ENCODE measurements at regions of chr7 and their contacts with region 1.

Region 1: DNA sequence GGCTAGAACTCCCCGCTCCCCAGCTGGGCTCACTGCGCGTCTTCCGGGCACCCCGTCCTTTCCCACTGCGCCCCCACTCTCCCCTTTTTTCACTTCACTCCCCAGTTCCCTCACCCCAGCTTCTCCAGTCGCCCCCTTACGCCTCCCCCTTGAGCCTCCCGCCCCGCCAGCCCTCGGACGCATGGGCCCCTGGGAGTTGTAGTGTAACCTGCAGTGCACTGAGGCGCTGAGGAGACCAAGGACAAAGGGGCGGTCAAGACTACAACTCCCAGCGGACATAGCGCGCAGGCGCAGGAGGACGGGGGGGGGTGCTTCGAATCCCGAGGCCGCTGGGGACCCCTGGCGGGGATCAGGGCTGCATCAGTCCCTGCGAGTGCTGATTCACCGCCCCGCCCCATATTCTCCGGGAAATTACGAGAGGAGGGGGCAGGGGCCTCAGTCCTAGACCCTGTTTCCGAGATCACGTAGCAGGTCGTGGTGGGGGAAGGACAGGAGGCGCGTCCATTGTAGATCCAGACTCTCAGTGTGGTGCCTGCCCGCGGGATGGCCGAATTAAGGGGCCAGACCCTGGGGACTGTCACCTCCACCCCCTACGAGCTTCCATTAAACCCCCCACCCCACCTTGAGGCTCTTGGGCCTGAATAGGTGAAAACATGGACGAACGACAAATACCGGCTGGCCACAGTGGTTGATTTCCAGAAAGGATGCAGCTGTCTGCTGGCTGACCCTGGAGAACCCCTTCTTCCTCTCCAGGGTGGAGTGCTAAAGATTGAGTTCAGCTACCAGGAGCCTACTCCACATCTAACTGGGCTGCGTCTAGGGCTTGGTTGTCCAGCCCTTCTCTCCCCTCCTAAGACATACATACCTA is 554 bp upstream of the YWHAG start:
- DNase-seq: peak; percentile 92
- H3K4me3 Mint-ChIP-seq: peak overlapping the region; percentile 88
- H3K27ac Mint-ChIP-seq: peak overlapping the region; percentile 96
- H3K4me1 Mint-ChIP-seq: peaks cover 48% of the 10 kb centered on the region
- H3K27me3 Mint-ChIP-seq: no peaks in the 10 kb centered on the region

Region 2: GRCh38 chr7:75531359-75531821 is 828.0 kb before region 1 on chr7:
- intact Hi-C with region 1: loop called (anchors 10 kb)
- DNase-seq: no peak
- H3K4me3 Mint-ChIP-seq: no peak overlapping the region
- H3K27ac Mint-ChIP-seq: no peak overlapping the region
- H3K4me1 Mint-ChIP-seq: peaks cover 20% of the 10 kb centered on the region
- H3K27me3 Mint-ChIP-seq: peaks cover 5% of the 10 kb centered on the region

Region 3: DNA sequence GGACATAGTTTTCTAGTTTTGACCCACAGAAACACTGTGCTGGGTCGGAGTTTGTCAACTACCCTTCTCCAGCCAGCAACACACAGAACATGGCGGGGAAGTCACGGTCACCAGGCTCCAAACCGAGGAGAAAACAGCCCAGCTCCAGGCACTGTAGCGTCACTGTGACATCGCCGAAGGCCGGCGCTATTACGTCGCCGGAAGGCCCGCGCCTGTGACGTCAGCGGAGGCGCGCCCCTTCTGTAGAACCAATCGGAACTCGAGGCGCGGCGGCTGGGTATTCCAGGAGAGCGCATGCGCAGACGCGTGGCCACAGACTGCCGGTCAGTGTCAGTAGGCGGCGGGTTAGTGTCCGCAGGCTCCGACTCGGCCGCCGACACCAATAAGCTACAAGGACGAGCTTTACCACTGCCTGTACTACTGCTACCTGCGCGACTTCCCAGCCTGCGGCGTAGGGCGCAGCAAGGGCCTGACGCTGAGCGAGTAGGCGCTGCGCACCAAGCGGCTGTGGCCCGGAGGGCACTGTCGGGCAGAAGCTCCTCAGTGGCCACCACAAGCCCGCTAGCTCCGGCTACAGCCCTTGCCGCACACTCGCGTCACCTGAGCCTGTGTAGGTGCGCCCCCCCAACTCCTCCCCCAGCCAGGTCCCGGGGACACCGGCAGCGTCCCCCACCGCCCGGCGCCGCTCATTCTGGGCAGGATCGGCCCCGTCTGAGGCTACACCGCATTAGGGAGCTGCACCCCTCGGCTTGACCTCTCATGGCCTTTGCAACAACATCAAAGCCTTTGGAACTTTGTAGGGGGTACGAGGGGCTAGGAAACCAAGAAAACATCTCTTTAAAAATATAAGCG is 192.7 kb before region 1 on chr7:
- intact Hi-C with region 1: loop called (anchors 1 kb)
- DNase-seq: peak; percentile 93
- H3K4me3 Mint-ChIP-seq: peak overlapping the region; percentile 85
- H3K27ac Mint-ChIP-seq: peak overlapping the region; percentile 85
- H3K4me1 Mint-ChIP-seq: peaks cover 10% of the 10 kb centered on the region
- H3K27me3 Mint-ChIP-seq: peaks cover 2% of the 10 kb centered on the region

Region 4: DNA sequence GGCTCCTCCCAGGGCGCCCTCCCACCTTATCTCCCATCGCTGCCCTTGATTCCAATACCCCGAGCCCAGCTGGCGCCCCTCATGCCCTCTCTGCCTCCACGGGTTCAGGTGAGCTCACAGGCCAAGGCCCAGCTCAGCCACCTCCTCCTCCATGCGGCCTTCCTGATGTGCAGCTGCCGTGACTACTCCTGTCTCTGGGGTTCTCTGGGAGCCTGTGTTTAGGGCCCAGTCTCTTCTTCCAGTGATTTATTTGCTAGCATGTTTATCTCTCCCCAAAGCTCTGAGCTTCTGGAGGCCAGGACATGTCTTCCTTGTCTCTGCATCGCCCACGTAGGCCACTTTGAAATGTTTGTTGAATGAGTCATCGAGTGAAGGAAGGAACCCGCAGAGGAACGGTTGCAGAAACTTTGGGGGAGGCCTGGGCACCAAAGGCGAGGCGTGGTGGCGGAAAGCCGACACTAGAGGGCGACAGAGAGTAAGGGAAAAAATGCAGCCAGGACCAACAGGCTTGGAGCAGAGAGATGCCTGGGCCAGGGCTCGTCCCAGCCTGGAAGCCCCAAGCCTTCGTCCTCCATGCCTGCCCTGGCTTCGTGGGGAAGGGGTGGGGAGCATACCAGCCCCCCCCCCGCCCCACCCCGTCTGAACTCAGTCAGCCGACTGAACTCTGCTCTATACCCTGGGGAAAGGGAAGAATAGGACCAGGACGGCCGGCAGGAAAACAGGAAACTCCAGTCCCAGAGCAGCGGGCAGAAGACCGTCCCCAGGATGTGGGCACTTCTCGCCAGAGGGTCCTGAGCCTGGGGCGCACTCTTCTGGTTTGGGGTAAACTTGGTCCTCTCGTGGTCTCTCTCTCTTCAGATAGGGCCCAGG is 67.8 kb before region 1 on chr7:
- intact Hi-C with region 1: loop called (anchors 1 kb)
- DNase-seq: peak; percentile 84
- H3K4me3 Mint-ChIP-seq: peak overlapping the region; percentile 43
- H3K27ac Mint-ChIP-seq: peak overlapping the region; percentile 64
- H3K4me1 Mint-ChIP-seq: peaks cover 13% of the 10 kb centered on the region
- H3K27me3 Mint-ChIP-seq: peaks cover 11% of the 10 kb centered on the region

Region 5: GRCh38 chr7:76302347-76303201 is 56.8 kb before region 1 on chr7 and contains the start of gene HSPB1:
- intact Hi-C with region 1: no loop called
- DNase-seq: peak; percentile 34
- H3K4me3 Mint-ChIP-seq: peak within 1 kb of the TSS; percentile 89
- H3K27ac Mint-ChIP-seq: peak within 1 kb of the TSS; percentile 90
- H3K4me1 Mint-ChIP-seq: peaks cover 17% of the 10 kb centered on the region
- H3K27me3 Mint-ChIP-seq: peaks cover 19% of the 10 kb centered on the region
- total RNA-seq, gene HSPB1: 78.4 and 87.2 TPM in 2 replicates

Region 6: GRCh38 chr7:76346778-76347177 is 12.6 kb before region 1 on chr7:
- intact Hi-C with region 1: loop called (anchors 2 kb)
- DNase-seq: no peak
- H3K4me3 Mint-ChIP-seq: peak overlapping the region; percentile 3
- H3K27ac Mint-ChIP-seq: peak overlapping the region; percentile 61
- H3K4me1 Mint-ChIP-seq: peaks cover 61% of the 10 kb centered on the region
- H3K27me3 Mint-ChIP-seq: no peaks in the 10 kb centered on the region

Region 7: GRCh38 chr7:76393116-76394031 is 34.0 kb after region 1 on chr7:
- intact Hi-C with region 1: loop called (anchors 1 kb)
- DNase-seq: peak; percentile 90
- H3K4me3 Mint-ChIP-seq: peak overlapping the region; percentile 86
- H3K27ac Mint-ChIP-seq: peak overlapping the region; percentile 97
- H3K4me1 Mint-ChIP-seq: peaks cover 33% of the 10 kb centered on the region
- H3K27me3 Mint-ChIP-seq: peaks cover 2% of the 10 kb centered on the region